ENCODE measurements at regions of chr5 and their contacts with region 1.

Region 1: DNA sequence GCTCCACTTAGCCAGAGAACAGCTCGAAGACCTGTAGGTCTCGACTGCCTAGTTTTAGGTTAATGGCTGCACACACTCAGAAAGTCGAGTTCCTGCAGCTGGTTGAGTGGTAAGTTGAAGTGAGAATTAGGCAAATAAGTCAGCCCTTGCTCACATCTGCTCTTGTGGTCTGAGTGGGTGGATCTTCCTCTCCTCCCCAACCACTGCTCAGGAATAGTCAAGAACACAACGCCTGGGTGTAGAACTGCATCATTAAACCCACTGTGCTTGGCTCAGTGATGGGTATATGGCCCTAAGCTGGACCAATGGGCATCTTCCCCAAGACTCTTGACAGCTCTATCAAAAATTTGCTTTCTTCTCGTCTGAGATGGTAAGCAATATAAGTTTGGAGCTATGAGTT is 20.9 kb upstream of the ADAM19 start:
- DNase-seq: peak; percentile 51
- H3K4me3 Mint-ChIP-seq: peak overlapping the region; percentile 46
- H3K27ac Mint-ChIP-seq: peak overlapping the region; percentile 75
- H3K4me1 Mint-ChIP-seq: peaks cover 91% of the 10 kb centered on the region
- H3K27me3 Mint-ChIP-seq: no peaks in the 10 kb centered on the region

Region 2: GRCh38 chr5:157271740-157272271 is 324.7 kb before region 1 on chr5:
- intact Hi-C with region 1: loop called (anchors 5 kb)
- DNase-seq: peak; percentile 85
- H3K4me3 Mint-ChIP-seq: peak overlapping the region; percentile 74
- H3K27ac Mint-ChIP-seq: peak overlapping the region; percentile 100
- H3K4me1 Mint-ChIP-seq: peaks cover 96% of the 10 kb centered on the region
- H3K27me3 Mint-ChIP-seq: no peaks in the 10 kb centered on the region

Region 3: GRCh38 chr5:157350939-157351801 is 245.3 kb before region 1 on chr5:
- intact Hi-C with region 1: loop called (anchors 1 kb)
- DNase-seq: no peak
- H3K4me3 Mint-ChIP-seq: peak overlapping the region; percentile 25
- H3K27ac Mint-ChIP-seq: peak overlapping the region; percentile 89
- H3K4me1 Mint-ChIP-seq: peaks cover 55% of the 10 kb centered on the region
- H3K27me3 Mint-ChIP-seq: no peaks in the 10 kb centered on the region

Region 4: GRCh38 chr5:157575381-157576020 is 21.0 kb before region 1 on chr5 and contains the start of gene ADAM19:
- intact Hi-C with region 1: loop called (anchors 1 kb)
- DNase-seq: peak; percentile 58
- H3K4me3 Mint-ChIP-seq: peak within 1 kb of the TSS; percentile 96
- H3K27ac Mint-ChIP-seq: peak within 1 kb of the TSS; percentile 92
- H3K4me1 Mint-ChIP-seq: peaks cover 64% of the 10 kb centered on the region
- H3K27me3 Mint-ChIP-seq: no peaks in the 10 kb centered on the region
- total RNA-seq, gene ADAM19: 341 and 348 TPM in 2 replicates

Region 5: GRCh38 chr5:157582731-157583620 is 13.5 kb before region 1 on chr5:
- intact Hi-C with region 1: loop called (anchors 1 kb)
- DNase-seq: no peak
- H3K4me3 Mint-ChIP-seq: peak overlapping the region; percentile 48
- H3K27ac Mint-ChIP-seq: peak overlapping the region; percentile 80
- H3K4me1 Mint-ChIP-seq: peaks cover 69% of the 10 kb centered on the region
- H3K27me3 Mint-ChIP-seq: no peaks in the 10 kb centered on the region

Region 6: GRCh38 chr5:157611571-157612476 is 15.3 kb after region 1 on chr5:
- intact Hi-C with region 1: loop called (anchors 1 kb)
- DNase-seq: no peak
- H3K4me3 Mint-ChIP-seq: peak overlapping the region; percentile 21
- H3K27ac Mint-ChIP-seq: peak overlapping the region; percentile 55
- H3K4me1 Mint-ChIP-seq: peaks cover 70% of the 10 kb centered on the region
- H3K27me3 Mint-ChIP-seq: no peaks in the 10 kb centered on the region